Activated T-helper 1 cell treated with anti-CD3 and anti-CD28 coated beads, Interleukin-12 subunit alpha, Interleukin-12 subunit beta, Interleukin-2, Interleukin-4 antibody, amounts not matched to agents 30 ng/mL and 10 ng/mL and 1 ng/mL, durations not matched to agents 14 hours and 24 hours and 36 hours (primary cell): ENCODE measurements at regions of chrX and their contacts with region 1.

Region 1: DNA sequence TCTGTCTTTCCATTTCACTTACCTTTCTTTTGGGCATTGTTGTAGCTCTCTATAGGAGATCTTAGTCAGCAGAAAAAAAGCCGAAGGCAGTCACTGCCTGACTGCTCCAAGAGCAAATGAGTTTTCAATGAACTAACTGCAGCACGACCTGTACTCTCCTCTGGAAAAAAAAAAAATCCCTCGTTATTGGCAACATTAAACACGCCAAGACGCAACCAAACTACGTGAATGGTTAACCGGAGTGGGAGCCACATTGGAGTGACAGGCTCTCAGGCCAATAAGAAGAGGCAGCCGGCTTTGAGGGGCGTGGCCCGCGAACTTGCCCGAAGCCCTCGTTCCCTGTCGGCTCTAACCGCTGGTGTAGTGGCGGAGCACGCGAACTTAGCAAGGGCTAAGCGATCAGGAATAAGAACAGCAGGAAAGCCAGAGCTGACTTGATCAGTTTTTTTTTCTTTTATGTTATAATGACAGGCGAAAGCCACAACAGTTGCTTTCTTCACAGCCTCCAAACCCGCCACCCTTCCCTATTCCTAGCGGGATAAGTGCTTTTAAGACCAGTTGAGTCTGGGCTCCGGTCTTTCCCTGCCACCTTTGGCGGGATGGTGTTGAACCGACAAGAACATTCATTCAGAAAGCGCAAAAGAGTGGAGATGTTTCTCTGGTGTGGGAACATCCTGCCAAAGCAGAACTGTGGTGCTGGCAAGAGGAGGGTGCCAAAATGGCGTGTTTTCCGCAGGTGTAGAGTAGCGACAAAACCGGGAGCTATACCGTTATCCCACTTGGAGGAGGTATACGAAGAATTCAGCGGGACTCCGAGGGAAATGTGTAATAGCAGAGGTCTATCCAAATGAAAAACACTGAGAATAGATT is 80.0 kb downstream of the HMGN5 start:
- DNase-seq: peak; percentile 78
- H3K4me3 Mint-ChIP-seq: peak overlapping the region; percentile 94
- H3K27ac Mint-ChIP-seq: peak overlapping the region; percentile 76
- H3K4me1 Mint-ChIP-seq: peaks cover 18% of the 10 kb centered on the region
- H3K27me3 Mint-ChIP-seq: peaks cover 9% of the 10 kb centered on the region

Region 2: DNA sequence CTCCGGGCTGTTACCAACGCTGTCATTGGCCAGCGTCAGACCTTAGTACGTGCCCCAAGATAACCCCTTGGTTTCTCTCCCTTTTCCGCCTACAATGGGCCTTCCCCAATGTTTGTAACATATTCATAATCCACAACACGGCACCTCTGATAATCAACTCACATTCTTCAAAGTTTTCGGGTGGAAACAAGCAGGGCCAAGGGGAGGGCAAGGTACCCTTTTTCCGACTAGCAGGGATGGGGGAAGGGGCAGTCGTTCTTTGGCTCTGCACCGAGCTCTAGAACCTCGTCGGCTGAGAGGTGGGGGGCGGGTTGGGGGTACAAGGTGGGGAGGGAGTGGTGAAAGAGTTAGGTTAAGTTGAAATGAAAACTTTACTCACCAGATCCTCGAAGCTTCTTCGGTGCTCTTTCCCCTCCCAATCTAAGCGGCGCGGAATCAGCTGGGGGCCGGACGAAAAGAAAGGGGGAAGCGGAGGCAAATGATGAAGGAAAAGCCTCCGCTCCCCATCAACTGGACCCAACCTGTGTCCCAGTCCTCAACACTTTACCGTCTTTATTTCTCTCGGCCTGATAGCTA is 313.5 kb before region 1 on chrX:
- intact Hi-C with region 1: loop called (anchors 1 kb)
- DNase-seq: peak; percentile 69
- H3K4me3 Mint-ChIP-seq: peak overlapping the region; percentile 89
- H3K27ac Mint-ChIP-seq: peak overlapping the region; percentile 89
- H3K4me1 Mint-ChIP-seq: peaks cover 19% of the 10 kb centered on the region
- H3K27me3 Mint-ChIP-seq: peaks cover 3% of the 10 kb centered on the region